Sigmoid colon (tissue), 7 donors: ENCODE measurements at regions of chrX and their contacts with region 1.

Region 1: DNA sequence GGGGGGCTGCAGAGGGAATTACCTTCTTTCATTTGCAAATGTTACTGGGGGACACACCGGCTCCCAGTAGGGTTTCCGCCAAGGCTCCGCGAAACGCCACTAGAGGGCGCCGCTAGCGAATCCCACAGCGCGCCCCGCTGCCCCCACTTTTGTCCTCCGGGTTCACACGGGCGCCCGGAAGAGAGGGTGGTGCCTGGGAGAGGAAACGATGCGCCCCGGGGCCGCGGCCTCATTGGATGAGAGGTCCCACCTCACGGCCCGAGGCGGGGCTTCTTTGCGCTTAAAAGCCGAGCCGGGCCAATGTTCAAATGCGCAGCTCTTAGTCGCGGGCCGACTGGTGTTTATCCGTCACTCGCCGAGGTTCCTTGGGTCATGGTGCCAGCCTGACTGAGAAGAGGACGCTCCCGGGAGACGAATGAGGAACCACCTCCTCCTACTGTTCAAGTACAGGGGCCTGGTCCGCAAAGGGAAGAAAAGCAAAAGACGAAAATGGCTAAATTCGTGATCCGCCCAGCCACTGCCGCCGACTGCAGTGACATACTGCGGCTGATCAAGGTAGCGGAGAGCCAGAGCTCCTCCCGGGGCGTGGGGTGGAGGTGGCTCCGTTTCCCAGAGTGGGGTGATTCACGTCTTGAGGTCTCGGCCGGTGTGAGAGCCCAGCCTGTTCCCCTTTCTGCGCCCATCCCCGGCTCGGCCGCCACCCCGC is at the start of gene SAT1:
- DNase-seq: peak; percentile 98
- H3K4me3 ChIP-seq: peak within 1 kb of the TSS; percentile 70 to 74 (median 71)
- H3K27ac ChIP-seq: peak within 1 kb of the TSS; percentile 91 to 96 (median 93)
- H3K4me1 ChIP-seq: peaks cover 0 to 9% (median 0%) of the 10 kb centered on the region in 4 donors
- H3K27me3 ChIP-seq: no peaks in the 10 kb centered on the region
- CTCF ChIP-seq: peak; percentile 53 to 76 (median 62)
- EP300 ChIP-seq: no peak
- POLR2A ChIP-seq: peak; percentile 95 to 97
- total RNA-seq, gene SAT1: 321 to 371 (median 343) TPM

Region 2: DNA sequence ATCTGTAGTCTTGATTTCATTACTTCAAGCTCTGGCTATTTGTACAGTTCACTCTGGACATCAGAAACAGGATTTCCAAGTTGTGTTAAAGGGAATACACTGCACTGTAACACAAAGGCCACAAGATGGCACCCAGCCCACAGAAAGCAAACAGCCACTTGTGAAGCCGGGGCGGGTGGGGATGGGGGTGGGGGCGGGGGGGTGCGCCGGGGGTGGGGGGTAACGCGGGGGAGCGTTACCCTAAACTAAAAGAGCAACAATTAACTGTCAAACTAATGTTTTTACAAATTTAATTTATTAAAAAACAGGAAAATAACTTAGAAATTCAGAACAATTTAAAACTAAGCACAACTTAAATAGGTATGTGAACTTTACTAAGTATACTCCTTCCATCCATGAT is 88.4 kb before region 1 on chrX:
- intact Hi-C with region 1: loop called (anchors 5 kb)
- DNase-seq: peak; percentile 82
- H3K4me3 ChIP-seq: no peak overlapping the region
- H3K27ac ChIP-seq: no peak overlapping the region
- H3K4me1 ChIP-seq: no peaks in the 10 kb centered on the region
- H3K27me3 ChIP-seq: no peaks in the 10 kb centered on the region
- CTCF ChIP-seq: peak in 1 of 4 experiments; percentile 54
- EP300 ChIP-seq: no peak
- POLR2A ChIP-seq: no peak

Region 3: DNA sequence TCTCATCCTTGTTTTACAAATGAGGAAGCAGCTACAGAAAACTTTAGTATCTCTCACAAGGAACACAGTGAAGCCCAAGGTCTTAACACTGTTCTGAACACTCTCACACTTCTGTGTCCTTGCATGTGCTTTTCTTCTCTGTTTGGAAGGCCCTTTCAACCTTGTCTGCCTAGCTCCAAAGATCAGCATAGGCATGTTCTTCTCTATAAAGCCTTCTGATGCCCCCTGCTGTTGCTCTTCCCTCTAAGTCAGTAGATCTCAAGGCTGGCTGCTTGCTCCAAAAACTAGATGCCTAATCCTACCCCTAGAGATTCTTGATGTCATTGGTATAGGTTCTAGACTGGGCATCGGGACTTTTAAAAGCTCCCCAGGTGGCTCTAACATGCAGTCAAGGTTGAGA is 118.8 kb after region 1 on chrX:
- intact Hi-C with region 1: loop called (anchors 1 kb)
- DNase-seq: peak; percentile 70
- H3K4me3 ChIP-seq: peak overlapping the region in 3 of 4 donors; percentile 20 to 26 (median 25)
- H3K27ac ChIP-seq: peak overlapping the region; percentile 54 to 73 (median 68)
- H3K4me1 ChIP-seq: peaks cover 0 to 37% (median 4%) of the 10 kb centered on the region in 4 donors
- H3K27me3 ChIP-seq: no peaks in the 10 kb centered on the region
- CTCF ChIP-seq: peak in 3 of 4 experiments; percentile 25 to 39 (median 38)
- EP300 ChIP-seq: no peak
- POLR2A ChIP-seq: no peak

Region 4: GRCh38 chrX:24024819-24025740 is 242.1 kb after region 1 on chrX:
- intact Hi-C with region 1: loop called (anchors 2 kb)
- DNase-seq: peak; percentile 95
- H3K4me3 ChIP-seq: peak overlapping the region; percentile 73 to 83 (median 79)
- H3K27ac ChIP-seq: peak overlapping the region; percentile 93 to 98 (median 96)
- H3K4me1 ChIP-seq: peaks cover 0 to 10% (median 4%) of the 10 kb centered on the region in 4 donors
- H3K27me3 ChIP-seq: no peaks in the 10 kb centered on the region
- CTCF ChIP-seq: no peak
- EP300 ChIP-seq: peak in 2 of 4 donors; percentile 42 to 53
- POLR2A ChIP-seq: peak; percentile 27 to 54

Region 5: GRCh38 chrX:24054182-24055042 is 271.4 kb after region 1 on chrX and contains the start of gene EIF2S3:
- intact Hi-C with region 1: loop called (anchors 10 kb)
- DNase-seq: peak; percentile 96
- H3K4me3 ChIP-seq: peak within 1 kb of the TSS in 3 of 4 donors; percentile 67 to 81 (median 70)
- H3K27ac ChIP-seq: peak within 1 kb of the TSS in 2 of 4 donors; percentile 89 to 91
- H3K4me1 ChIP-seq: peaks cover 0 to 6% (median 0%) of the 10 kb centered on the region in 4 donors
- H3K27me3 ChIP-seq: no peaks in the 10 kb centered on the region
- CTCF ChIP-seq: peak in 3 of 4 experiments; percentile 32 to 43 (median 43)
- EP300 ChIP-seq: peak in 1 of 4 donors; percentile 65
- POLR2A ChIP-seq: peak in 1 of 2 donors; percentile 27
- total RNA-seq, gene EIF2S3: 134 to 222 (median 143) TPM